MCF 10A (cell line): ENCODE measurements at regions of chr15 and their contacts with region 1.

Region 1: DNA sequence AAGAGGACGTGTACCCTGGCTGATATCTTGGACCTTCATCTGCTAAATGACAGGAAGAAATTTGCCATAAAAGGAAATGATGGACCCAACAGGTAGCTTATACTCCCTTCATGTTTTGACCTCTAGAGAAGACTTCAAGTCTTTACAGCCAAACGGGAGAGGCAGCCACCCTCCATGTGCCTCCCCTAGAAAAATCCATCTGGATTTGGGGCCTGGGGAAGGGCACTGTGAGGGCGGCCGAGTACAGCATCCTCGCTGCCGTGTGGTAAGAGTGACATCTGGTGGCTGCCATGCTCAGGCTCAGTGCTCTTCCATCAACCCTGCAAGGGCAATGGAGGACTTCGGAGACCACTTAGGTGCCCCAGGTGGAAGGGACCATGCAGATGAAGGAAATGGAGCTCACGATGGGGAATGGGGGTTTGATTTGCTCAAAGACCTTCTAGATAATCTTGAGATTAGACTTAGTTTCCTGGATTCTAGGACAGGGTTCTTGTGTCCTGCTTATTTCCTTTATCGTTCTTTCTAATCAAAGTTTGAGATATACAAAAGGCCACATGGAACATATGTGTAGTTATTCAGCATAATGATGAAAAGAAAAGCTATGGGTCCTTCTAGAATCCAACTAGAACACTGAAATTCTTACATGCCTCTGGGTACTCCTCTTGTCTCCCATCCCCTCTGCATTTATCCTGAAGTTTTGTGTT is 44.4 kb downstream of the AQP9 start:
- DNase-seq: peak; percentile 55
- H3K4me3 Mint-ChIP-seq: no peak overlapping the region
- H3K27ac Mint-ChIP-seq: no peak overlapping the region
- H3K4me1 Mint-ChIP-seq: peaks cover 12% of the 10 kb centered on the region
- H3K27me3 Mint-ChIP-seq: peaks cover 10% of the 10 kb centered on the region
- CTCF ChIP-seq: peak; percentile 88

Region 2: DNA sequence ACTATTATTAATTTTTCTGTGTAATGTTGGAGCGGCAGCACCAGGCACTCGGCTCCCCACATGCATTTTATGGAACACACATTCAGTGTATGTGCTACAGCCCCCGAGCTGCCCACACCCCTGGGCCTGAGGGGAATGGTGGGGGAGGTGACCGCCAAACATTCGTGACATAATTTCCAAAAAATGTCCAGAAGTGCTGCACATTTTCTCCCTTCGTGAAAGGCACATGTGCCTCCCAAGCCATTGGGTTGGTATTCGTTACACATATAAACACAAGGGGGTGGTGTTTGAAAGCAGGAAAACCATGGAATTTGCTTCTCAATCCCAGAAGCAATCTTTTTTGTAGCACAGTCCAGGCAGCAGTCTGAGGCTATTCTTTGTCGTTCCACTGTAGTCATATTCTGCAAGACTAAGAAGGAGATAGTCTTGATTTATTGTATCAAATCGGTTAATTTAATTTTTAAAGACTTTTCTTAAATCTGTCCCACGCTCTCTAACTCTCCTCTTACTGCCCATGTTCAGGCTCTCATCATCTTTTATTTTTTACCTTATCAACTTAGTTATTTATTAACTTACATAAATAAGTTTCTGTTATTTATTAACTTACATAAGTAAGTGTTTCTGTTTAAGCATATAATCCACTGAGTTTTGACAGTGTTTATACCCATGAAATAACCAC is 515.3 kb before region 1 on chr15:
- CTCF ChIA-PET with region 1: interaction called, 6 read pairs
- POLR2A ChIA-PET with region 1: no interaction called
- intact Hi-C with region 1: loop called (anchors 2 kb)
- DNase-seq: peak; percentile 73
- H3K4me3 Mint-ChIP-seq: peak overlapping the region; percentile 43
- H3K27ac Mint-ChIP-seq: no peak overlapping the region
- H3K4me1 Mint-ChIP-seq: peaks cover 19% of the 10 kb centered on the region
- H3K27me3 Mint-ChIP-seq: no peaks in the 10 kb centered on the region
- CTCF ChIP-seq: peak; percentile 50

Region 3: DNA sequence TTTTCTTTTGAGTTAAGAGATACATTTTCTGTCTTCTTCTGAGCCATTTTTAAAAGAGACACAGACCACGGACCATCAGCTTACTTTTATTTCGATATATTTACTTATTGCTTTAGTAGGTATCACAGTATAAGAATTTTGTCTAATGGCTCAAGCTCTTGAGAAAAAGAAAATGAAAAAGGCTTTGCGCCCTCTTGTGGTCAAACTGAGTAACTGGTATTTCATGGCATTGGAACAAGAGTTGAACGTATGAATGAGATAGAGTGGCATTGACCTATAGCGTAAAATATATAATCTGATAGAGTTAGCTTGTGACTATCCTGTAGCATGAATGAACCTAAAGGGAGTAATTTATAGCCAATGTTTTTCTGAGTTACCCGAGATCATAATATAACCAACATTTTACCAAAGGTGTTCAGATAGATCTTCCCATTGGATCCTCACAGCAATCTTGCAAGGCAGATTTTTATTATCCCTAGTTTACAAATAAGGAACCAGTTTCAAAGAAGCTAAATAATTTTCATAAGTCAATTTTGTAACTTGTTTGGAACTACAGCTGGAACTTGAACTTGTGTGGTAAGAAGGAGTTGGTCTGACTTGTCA is 321.5 kb before region 1 on chr15:
- CTCF ChIA-PET with region 1: interaction called, 33 read pairs
- POLR2A ChIA-PET with region 1: interaction called, 3 read pairs
- intact Hi-C with region 1: loop called (anchors 1 kb)
- DNase-seq: peak; percentile 75
- H3K4me3 Mint-ChIP-seq: no peak overlapping the region
- H3K27ac Mint-ChIP-seq: no peak overlapping the region
- H3K4me1 Mint-ChIP-seq: peaks cover 19% of the 10 kb centered on the region
- H3K27me3 Mint-ChIP-seq: no peaks in the 10 kb centered on the region
- CTCF ChIP-seq: peak; percentile 69

Region 4: GRCh38 chr15:58070801-58071418 is 111.7 kb before region 1 on chr15:
- CTCF ChIA-PET with region 1: interaction called, 33 read pairs
- POLR2A ChIA-PET with region 1: no interaction called
- intact Hi-C with region 1: no loop called
- DNase-seq: peak; percentile 79
- H3K4me3 Mint-ChIP-seq: no peak overlapping the region
- H3K27ac Mint-ChIP-seq: no peak overlapping the region
- H3K4me1 Mint-ChIP-seq: peaks cover 5% of the 10 kb centered on the region
- H3K27me3 Mint-ChIP-seq: no peaks in the 10 kb centered on the region
- CTCF ChIP-seq: peak; percentile 93

Region 5: GRCh38 chr15:58095415-58095814 is 87.2 kb before region 1 on chr15:
- CTCF ChIA-PET with region 1: interaction called, 11 read pairs
- POLR2A ChIA-PET with region 1: no interaction called
- intact Hi-C with region 1: no loop called
- DNase-seq: no peak
- H3K4me3 Mint-ChIP-seq: no peak overlapping the region
- H3K27ac Mint-ChIP-seq: no peak overlapping the region
- H3K4me1 Mint-ChIP-seq: no peaks in the 10 kb centered on the region
- H3K27me3 Mint-ChIP-seq: peaks cover 11% of the 10 kb centered on the region
- CTCF ChIP-seq: no peak

Region 6: GRCh38 chr15:58212909-58213526 is 30.4 kb after region 1 on chr15:
- CTCF ChIA-PET with region 1: interaction called, 14 read pairs
- POLR2A ChIA-PET with region 1: no interaction called
- intact Hi-C with region 1: no loop called
- DNase-seq: peak; percentile 50
- H3K4me3 Mint-ChIP-seq: no peak overlapping the region
- H3K27ac Mint-ChIP-seq: no peak overlapping the region
- H3K4me1 Mint-ChIP-seq: peaks cover 33% of the 10 kb centered on the region
- H3K27me3 Mint-ChIP-seq: no peaks in the 10 kb centered on the region
- CTCF ChIP-seq: peak; percentile 35

Region 7: GRCh38 chr15:58498821-58499580 is 316.4 kb after region 1 on chr15:
- CTCF ChIA-PET with region 1: no interaction called
- POLR2A ChIA-PET with region 1: no interaction called
- intact Hi-C with region 1: no loop called
- DNase-seq: peak; percentile 41
- H3K4me3 Mint-ChIP-seq: no peak overlapping the region
- H3K27ac Mint-ChIP-seq: no peak overlapping the region
- H3K4me1 Mint-ChIP-seq: peaks cover 5% of the 10 kb centered on the region
- H3K27me3 Mint-ChIP-seq: no peaks in the 10 kb centered on the region
- CTCF ChIP-seq: no peak